GM12878 (cell line): ENCODE measurements at regions of chr12 and their contacts with region 1.

Region 1: GRCh38 chr12:79935021-79935623 is at the start of gene PPP1R12A:
- DNase-seq: peak; percentile 83
- ATAC-seq: peak; percentile 91
- H3K4me3 ChIP-seq: peak within 1 kb of the TSS; percentile 96
- H3K27ac ChIP-seq: peak within 1 kb of the TSS; percentile 96
- H3K4me1 ChIP-seq: peaks cover 7% of the 10 kb centered on the region; the same call in 1 of the 2 replicates
- H3K27me3 ChIP-seq: no peaks in the 10 kb centered on the region
- CTCF ChIP-seq: peak in 1 of 3 experiments; percentile 9; a peak in 1 of 6 replicates
- EP300 ChIP-seq: no peak
- POLR2A ChIP-seq: peak; percentile 97
- RAD21 ChIP-seq: no peak
- polyA plus RNA-seq, gene PPP1R12A: 22.8 to 31.6 TPM

Region 2: GRCh38 chr12:79886917-79887519 is 48.1 kb before region 1 on chr12:
- CTCF ChIA-PET with region 1: interaction called, 10 read pairs
- POLR2A ChIA-PET with region 1: interaction called, 4 read pairs
- RAD21 ChIA-PET with region 1: interaction called, 4 read pairs
- SMC1A ChIA-PET with region 1: interaction called, 6 read pairs
- in situ Hi-C with region 1: no loop called
- intact Hi-C with region 1: loop called (anchors 2 kb)
- DNase-seq: peak; percentile 23
- ATAC-seq: peak; percentile 94
- H3K4me3 ChIP-seq: no peak overlapping the region
- H3K27ac ChIP-seq: no peak overlapping the region
- H3K4me1 ChIP-seq: no peaks in the 10 kb centered on the region
- H3K27me3 ChIP-seq: no peaks in the 10 kb centered on the region
- CTCF ChIP-seq: peak; percentile 49 to 57 (median 51); a peak in 5 of 6 replicates
- EP300 ChIP-seq: no peak
- POLR2A ChIP-seq: no peak
- RAD21 ChIP-seq: peak; percentile 41; the same call in 1 of the 2 replicates

Region 3: DNA sequence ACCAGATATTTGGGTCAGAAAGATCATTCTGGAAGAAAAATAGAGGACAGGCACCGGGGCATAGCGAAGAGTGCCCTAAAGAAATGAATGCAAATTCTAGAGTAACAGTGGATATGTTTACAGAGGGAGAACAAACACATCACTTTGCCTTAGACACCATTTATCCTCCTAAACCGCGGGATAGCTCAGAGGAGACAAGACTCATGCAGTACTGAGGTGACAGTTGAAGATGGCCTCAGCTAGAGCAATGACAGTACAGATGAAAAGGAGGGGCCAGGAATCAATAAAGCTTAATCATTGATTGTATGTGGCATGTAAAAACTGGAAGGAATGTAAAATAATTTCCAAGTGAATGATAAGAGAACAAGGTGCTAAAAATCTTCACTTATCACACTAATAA is 10.3 kb after region 1 on chr12:
- CTCF ChIA-PET with region 1: interaction called, 4 read pairs
- POLR2A ChIA-PET with region 1: no interaction called
- RAD21 ChIA-PET with region 1: no interaction called
- SMC1A ChIA-PET with region 1: interaction called, 12 read pairs
- in situ Hi-C with region 1: no loop called
- intact Hi-C with region 1: no loop called
- DNase-seq: no peak
- ATAC-seq: no peak
- H3K4me3 ChIP-seq: no peak overlapping the region
- H3K27ac ChIP-seq: no peak overlapping the region
- H3K4me1 ChIP-seq: no peaks in the 10 kb centered on the region
- H3K27me3 ChIP-seq: no peaks in the 10 kb centered on the region
- CTCF ChIP-seq: no peak
- EP300 ChIP-seq: no peak
- POLR2A ChIP-seq: no peak
- RAD21 ChIP-seq: no peak

Region 4: DNA sequence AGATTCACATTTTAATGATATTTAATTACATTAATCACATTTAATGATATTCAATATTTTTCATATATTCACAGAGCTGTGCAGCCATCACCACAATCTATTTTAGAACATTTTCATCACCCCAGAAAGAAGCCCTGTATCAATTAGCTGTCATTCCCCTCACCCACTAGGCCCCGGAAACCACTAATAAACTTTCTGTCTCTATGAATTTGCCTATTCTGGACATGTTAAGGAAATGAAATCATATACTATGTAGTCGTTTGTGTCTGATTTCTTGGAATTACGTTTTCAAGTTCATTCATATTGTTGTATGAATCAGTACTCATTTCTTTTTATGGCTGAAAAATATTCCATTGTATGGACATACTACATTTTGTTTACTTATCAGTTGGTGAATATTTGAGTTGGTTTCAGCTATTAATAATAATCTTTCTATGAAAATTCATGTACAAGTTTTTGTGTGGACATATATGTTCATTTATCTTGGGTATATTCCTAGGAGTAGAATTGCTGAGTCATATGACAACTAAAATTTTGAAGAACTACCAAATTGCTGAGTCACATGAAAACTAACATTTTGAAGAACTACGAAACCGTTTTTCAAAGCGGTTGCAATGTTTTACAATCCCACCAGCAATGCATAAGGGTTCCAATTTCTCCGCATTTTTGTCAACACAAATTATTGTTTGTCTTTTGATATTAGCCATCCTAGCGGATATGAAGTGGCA is 152.5 kb after region 1 on chr12:
- CTCF ChIA-PET with region 1: no interaction called
- POLR2A ChIA-PET with region 1: no interaction called
- RAD21 ChIA-PET with region 1: no interaction called
- SMC1A ChIA-PET with region 1: no interaction called
- in situ Hi-C with region 1: no loop called
- intact Hi-C with region 1: no loop called
- DNase-seq: no peak
- ATAC-seq: peak; percentile 61
- H3K4me3 ChIP-seq: no peak overlapping the region
- H3K27ac ChIP-seq: no peak overlapping the region
- H3K4me1 ChIP-seq: no peaks in the 10 kb centered on the region
- H3K27me3 ChIP-seq: no peaks in the 10 kb centered on the region
- CTCF ChIP-seq: no peak
- EP300 ChIP-seq: no peak
- POLR2A ChIP-seq: no peak
- RAD21 ChIP-seq: no peak

Region 5: GRCh38 chr12:80299976-80300375 is 364.9 kb after region 1 on chr12:
- CTCF ChIA-PET with region 1: no interaction called
- POLR2A ChIA-PET with region 1: no interaction called
- RAD21 ChIA-PET with region 1: no interaction called
- SMC1A ChIA-PET with region 1: no interaction called
- in situ Hi-C with region 1: no loop called
- intact Hi-C with region 1: loop called (anchors 5 kb)
- DNase-seq: peak; percentile 76
- ATAC-seq: peak; percentile 88
- H3K4me3 ChIP-seq: peak overlapping the region; percentile 46; the same call in 1 of the 2 replicates
- H3K27ac ChIP-seq: peak overlapping the region; percentile 73
- H3K4me1 ChIP-seq: peaks cover 26% of the 10 kb centered on the region
- H3K27me3 ChIP-seq: no peaks in the 10 kb centered on the region
- CTCF ChIP-seq: no peak
- EP300 ChIP-seq: peak; percentile 90 to 96
- POLR2A ChIP-seq: no peak
- RAD21 ChIP-seq: no peak